ENCODE measurements at regions of chr22 and their contacts with region 1.

Region 1: GRCh38 chr22:36445158-36445668 is 36.2 kb downstream of the TXN2 start:
- DNase-seq: peak; percentile 56 to 61
- ATAC-seq: peak; percentile 20 to 78 (median 42)
- H3K4me3 ChIP-seq: no peak overlapping the region
- H3K27ac ChIP-seq: peak overlapping the region in 8 of 10 donors; percentile 12 to 81 (median 54)
- H3K4me1 ChIP-seq: peaks cover 2 to 80% (median 24%) of the 10 kb centered on the region in 9 donors
- H3K27me3 ChIP-seq: no peaks in the 10 kb centered on the region
- CTCF ChIP-seq: no peak

Region 2: GRCh38 chr22:36398621-36399469 is 46.4 kb before region 1 on chr22:
- intact Hi-C with region 1: loop called in 4 of 10 experiments (anchors 5 to 10 kb)
- DNase-seq: no peak
- ATAC-seq: peak in 2 of 8 donors; percentile 17 to 26
- H3K4me3 ChIP-seq: no peak overlapping the region
- H3K27ac ChIP-seq: peak overlapping the region in 1 of 10 donors; percentile 35
- H3K4me1 ChIP-seq: peaks cover 0 to 60% (median 5%) of the 10 kb centered on the region in 9 donors
- H3K27me3 ChIP-seq: no peaks in the 10 kb centered on the region
- CTCF ChIP-seq: no peak

Region 3: DNA sequence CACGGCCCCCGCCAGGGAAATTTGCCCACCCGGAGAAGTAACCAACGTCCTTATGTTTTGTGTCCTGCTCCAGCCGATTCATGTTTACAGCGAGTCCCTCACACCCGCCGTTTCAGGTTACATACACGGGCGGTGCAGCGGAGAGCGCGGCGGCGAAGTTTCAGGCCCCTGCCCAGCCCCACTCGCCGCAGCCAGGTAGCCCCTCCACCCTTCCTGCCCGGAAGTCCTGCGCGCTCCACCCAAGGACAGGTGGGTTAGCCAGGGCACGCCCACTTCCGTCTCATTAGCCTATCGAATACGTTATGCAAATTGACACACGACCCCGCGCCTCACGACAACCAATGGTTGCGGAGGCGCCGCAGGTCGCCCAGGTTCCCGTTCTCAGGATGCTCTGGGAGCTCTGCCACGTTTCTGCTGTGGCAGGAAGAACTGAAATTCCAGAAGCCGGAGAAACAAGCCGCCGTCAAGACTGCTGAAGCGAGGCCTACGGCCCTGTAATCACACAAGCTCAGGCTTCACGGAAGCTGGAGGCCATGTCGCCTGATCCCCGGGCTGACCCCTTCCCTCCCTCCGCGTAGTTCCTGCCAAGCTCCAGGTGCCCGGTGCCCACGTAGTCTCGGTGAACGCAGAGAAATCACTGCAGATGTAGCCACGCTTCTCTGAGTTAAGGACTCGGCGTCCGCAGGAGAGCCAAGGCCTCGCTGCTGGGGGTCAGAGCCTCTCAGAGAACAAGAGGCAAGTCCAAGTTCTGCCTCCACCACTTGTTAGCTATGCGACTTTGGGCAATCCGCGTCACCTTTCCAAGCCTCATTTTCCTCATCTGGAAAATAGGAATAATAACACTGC is 35.1 kb before region 1 on chr22:
- intact Hi-C with region 1: loop called in 1 of 10 experiments (anchors 5 kb)
- DNase-seq: peak; percentile 73 to 78
- ATAC-seq: peak; percentile 84 to 95 (median 88)
- H3K4me3 ChIP-seq: peak overlapping the region in 9 of 10 donors; percentile 8 to 45 (median 36)
- H3K27ac ChIP-seq: peak overlapping the region in 9 of 10 donors; percentile 40 to 83 (median 75)
- H3K4me1 ChIP-seq: peaks cover 0 to 51% (median 12%) of the 10 kb centered on the region in 9 donors
- H3K27me3 ChIP-seq: no peaks in the 10 kb centered on the region
- CTCF ChIP-seq: no peak

Region 4: DNA sequence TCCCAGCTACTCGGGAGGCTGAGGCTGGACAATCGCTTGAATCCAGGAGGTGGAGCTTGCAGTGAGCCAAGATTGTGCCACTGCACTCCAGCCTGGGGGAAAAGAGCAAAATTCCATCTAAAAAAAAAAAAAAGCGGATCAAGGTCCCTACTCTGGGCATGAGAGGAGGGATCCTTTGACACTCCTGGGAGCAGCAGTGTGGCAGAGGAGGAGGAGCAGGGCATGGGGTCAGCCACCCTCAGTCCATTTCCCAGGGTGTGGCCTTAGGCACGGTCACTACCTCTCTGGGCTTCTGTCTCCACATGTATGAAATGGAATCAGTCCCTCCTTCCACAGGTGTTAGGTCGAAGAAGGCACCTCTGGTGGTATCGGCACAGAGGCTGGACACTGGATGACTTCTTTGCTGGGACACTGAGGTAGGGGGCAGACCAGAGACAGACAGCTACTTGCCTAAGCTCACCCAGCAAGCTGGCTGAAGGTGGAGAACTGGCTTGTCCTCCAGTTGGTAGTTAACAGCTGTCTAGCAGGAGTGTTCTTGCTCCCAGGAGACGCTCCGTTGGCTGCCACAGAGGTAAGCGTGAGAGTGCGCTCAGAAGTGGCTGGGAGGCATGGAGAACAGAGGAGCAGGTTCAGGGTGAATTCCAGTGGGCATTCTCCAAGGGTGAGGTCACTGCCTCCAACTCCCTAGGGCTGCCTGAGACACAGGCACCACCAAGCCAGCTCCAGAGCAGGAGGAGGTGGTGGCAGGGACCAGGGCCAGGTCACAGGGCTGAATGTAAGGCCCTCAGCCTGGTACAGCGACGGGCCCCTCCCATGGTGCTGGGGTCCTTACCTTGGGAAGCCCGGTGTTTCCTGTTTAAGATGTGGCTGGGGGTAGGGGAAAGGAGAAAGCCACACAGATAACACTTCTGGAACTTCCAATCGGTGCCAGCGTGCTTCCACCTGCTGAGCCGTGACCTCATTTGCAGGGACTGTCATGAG is 16.7 kb after region 1 on chr22:
- intact Hi-C with region 1: no loop called
- DNase-seq: no peak
- ATAC-seq: peak in 6 of 8 donors; percentile 1 to 41 (median 22)
- H3K4me3 ChIP-seq: no peak overlapping the region
- H3K27ac ChIP-seq: peak overlapping the region; percentile 62 to 97 (median 90)
- H3K4me1 ChIP-seq: peaks cover 21 to 83% (median 73%) of the 10 kb centered on the region in 9 donors
- H3K27me3 ChIP-seq: no peaks in the 10 kb centered on the region
- CTCF ChIP-seq: no peak

Region 5: DNA sequence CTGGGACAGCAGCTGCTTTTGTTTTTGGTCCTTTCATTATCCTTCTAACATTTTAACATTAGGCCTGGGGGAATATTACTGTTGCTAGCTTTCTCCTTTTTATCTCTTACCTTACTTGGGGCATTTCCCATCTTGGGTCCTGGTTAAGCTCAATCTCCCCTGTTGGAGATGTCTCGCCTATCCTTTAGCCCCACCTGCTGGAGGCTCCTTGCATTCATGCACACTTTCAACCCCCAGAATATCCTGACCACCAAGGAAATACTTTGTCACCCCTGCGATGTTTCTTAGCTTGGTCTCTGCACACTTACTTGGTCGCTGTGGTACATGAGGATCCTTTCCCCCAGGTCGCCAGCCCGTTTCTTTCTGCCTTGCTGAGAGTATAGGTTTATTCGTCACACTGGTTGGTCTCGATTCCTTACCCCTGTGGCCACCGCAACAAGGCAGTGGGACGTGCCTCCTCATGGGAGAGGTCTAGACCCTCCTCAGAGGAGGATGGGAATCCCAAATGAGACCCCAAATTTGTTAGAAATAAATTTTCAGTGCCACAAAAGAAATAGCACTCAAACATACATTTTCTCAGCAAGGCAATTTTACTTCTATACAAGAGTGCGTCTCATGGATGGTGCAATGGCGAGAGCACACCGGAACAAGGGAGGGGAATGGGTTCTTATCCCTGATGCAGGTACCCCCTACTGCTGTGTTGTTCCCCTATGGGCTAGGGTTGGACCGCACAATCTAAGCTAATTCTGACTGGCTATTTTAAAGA is 41.6 kb after region 1 on chr22:
- intact Hi-C with region 1: no loop called
- DNase-seq: peak in 1 of 2 donors; percentile 54
- ATAC-seq: no peak
- H3K4me3 ChIP-seq: no peak overlapping the region
- H3K27ac ChIP-seq: no peak overlapping the region
- H3K4me1 ChIP-seq: peaks cover 0 to 8% (median 6%) of the 10 kb centered on the region in 9 donors
- H3K27me3 ChIP-seq: no peaks in the 10 kb centered on the region
- CTCF ChIP-seq: peak; percentile 35 to 74 (median 71)